Calu3 (cell line): ENCODE measurements at regions of chr20 and their contacts with region 1.

Region 1: DNA sequence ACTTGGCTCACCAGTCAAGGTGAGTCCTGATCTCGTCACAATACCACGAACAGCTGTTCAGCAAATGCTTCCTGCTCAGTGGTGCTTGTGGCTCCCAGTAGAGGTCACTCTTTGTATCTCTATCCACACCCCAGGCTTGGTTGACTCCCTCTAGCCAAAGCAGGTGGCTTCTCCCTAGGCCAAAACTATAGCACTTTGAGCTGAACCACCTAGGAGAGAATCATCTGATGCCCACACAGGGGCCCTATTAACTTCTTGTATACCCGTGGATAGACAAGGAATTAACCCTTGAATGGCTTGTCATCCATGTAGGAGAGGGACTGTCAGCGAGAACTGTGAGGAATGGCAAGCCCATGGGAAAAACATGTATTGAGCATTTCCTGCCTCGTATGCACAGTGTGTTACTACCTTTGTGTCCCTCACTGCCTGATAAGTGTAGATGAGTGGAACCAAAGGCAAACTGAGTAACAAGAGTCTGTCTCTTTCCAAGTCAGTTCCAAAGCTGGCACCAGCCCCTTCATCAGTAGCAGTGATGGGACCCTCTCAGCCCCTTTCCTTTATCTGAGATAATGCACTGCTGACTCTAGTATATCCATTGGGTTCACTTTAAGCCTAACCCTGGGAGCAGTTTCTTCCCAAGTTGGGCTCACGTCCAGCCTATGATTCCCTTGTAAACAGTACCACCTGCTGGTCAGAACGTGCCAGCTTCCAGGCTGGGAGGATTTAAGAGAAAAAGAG is 42.5 kb downstream of the EIF2S2 start:
- DNase-seq: peak; percentile 84
- H3K4me3 Mint-ChIP-seq: no peak overlapping the region
- H3K27ac Mint-ChIP-seq: peak overlapping the region; percentile 39
- H3K4me1 Mint-ChIP-seq: peaks cover 49% of the 10 kb centered on the region
- H3K27me3 Mint-ChIP-seq: no peaks in the 10 kb centered on the region
- CTCF ChIP-seq: peak; percentile 87

Region 2: GRCh38 chr20:33862709-33863403 is 206.7 kb before region 1 on chr20:
- CTCF ChIA-PET with region 1: interaction called, 17 read pairs
- intact Hi-C with region 1: loop called (anchors 2 kb)
- DNase-seq: peak; percentile 71
- H3K4me3 Mint-ChIP-seq: no peak overlapping the region
- H3K27ac Mint-ChIP-seq: no peak overlapping the region
- H3K4me1 Mint-ChIP-seq: peaks cover 17% of the 10 kb centered on the region
- H3K27me3 Mint-ChIP-seq: peaks cover 13% of the 10 kb centered on the region
- CTCF ChIP-seq: peak; percentile 92

Region 3: DNA sequence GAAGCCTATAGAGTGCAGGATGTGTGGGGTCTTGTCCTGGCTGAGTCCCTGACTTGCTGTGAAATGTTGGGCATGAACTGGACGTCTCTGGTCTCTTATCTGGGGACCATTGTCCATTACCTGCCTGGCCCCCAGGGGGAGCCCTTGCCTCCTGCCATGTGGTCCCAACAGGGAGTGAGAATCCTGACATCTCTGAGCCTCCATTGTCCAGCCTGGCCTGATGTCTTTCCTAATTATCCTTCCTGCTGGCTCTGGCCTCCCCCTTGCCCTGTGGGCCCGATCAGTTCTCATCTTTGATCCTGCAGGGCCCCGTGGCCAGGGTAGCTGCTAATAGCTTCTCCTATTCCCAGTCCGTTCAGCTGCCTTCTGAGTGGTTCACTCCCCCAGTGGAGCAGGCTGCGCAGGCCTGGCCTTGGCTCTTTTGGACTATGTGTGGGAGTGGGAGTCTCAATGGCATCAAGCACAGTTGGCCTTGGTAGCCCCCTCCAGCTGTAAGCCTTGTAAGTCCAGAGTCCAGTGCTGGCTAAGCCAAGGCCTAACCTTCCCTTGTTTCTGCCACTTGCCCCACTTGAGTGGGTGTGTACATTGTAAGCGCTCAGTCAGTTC is 153.7 kb before region 1 on chr20:
- CTCF ChIA-PET with region 1: interaction called, 7 read pairs
- intact Hi-C with region 1: loop called (anchors 1 kb)
- DNase-seq: peak; percentile 81
- H3K4me3 Mint-ChIP-seq: no peak overlapping the region
- H3K27ac Mint-ChIP-seq: no peak overlapping the region
- H3K4me1 Mint-ChIP-seq: peaks cover 31% of the 10 kb centered on the region
- H3K27me3 Mint-ChIP-seq: no peaks in the 10 kb centered on the region
- CTCF ChIP-seq: peak; percentile 89

Region 4: DNA sequence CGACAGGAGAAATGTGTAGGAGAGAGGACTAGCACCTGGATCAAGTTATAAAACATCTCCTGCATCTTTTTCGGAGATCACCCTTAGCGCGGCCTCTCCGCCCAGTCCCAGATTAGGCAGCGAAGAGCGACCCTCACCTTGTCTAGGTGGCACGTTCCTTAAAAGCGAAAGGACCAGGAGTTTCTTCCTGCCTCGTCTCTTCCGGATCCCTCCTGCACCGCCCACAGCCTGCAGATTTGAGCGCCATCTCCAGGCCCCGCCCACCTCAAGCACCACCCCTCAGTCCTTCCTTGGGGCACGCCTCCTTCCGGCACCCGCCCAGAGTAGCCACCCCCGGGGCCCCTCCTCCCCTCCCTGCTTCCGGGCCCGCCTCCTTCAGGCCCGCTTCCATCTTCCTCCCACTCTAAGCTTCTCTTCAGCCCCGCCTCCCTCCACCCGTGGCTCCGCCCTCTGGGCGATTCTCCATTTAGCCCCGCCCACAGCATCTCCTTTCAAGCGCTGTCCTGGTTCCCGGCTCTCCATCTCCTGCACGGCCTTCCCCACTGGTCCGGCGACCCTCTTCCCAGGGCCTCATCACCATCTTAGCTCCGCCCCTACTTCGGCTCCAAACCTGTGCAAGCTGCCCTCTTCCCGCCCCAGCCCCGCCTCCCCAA is 76.5 kb before region 1 on chr20:
- CTCF ChIA-PET with region 1: interaction called, 10 read pairs
- intact Hi-C with region 1: no loop called
- DNase-seq: peak; percentile 100
- H3K4me3 Mint-ChIP-seq: peak overlapping the region; percentile 82
- H3K27ac Mint-ChIP-seq: peak overlapping the region; percentile 82
- H3K4me1 Mint-ChIP-seq: peaks cover 42% of the 10 kb centered on the region
- H3K27me3 Mint-ChIP-seq: no peaks in the 10 kb centered on the region
- CTCF ChIP-seq: no peak

Region 5: GRCh38 chr20:34001378-34001777 is 68.1 kb before region 1 on chr20:
- CTCF ChIA-PET with region 1: no interaction called
- intact Hi-C with region 1: loop called (anchors 5 kb)
- DNase-seq: no peak
- H3K4me3 Mint-ChIP-seq: no peak overlapping the region
- H3K27ac Mint-ChIP-seq: no peak overlapping the region
- H3K4me1 Mint-ChIP-seq: peaks cover 80% of the 10 kb centered on the region
- H3K27me3 Mint-ChIP-seq: no peaks in the 10 kb centered on the region
- CTCF ChIP-seq: no peak